ENCODE measurements at regions of chr16 and their contacts with region 1.

Region 1: GRCh38 chr16:4416200-4417032 is at the start of gene CORO7:
- DNase-seq: peak; percentile 98 to 100 (median 99)
- ATAC-seq: peak; percentile 78
- H3K4me3 ChIP-seq: peak within 1 kb of the TSS; percentile 51 to 60
- H3K4me3 Mint-ChIP-seq: peak within 1 kb of the TSS; percentile 97
- H3K27ac ChIP-seq: peak within 1 kb of the TSS; percentile 89 to 94
- H3K27ac Mint-ChIP-seq: peak within 1 kb of the TSS; percentile 99
- H3K4me1 ChIP-seq: peaks cover 44% of the 10 kb centered on the region
- H3K4me1 Mint-ChIP-seq: peaks cover 33% of the 10 kb centered on the region
- H3K27me3 ChIP-seq: no peaks in the 10 kb centered on the region
- H3K27me3 Mint-ChIP-seq: no peaks in the 10 kb centered on the region
- CTCF ChIP-seq: no peak
- total RNA-seq, gene CORO7: 950 to 991 TPM

Region 2: DNA sequence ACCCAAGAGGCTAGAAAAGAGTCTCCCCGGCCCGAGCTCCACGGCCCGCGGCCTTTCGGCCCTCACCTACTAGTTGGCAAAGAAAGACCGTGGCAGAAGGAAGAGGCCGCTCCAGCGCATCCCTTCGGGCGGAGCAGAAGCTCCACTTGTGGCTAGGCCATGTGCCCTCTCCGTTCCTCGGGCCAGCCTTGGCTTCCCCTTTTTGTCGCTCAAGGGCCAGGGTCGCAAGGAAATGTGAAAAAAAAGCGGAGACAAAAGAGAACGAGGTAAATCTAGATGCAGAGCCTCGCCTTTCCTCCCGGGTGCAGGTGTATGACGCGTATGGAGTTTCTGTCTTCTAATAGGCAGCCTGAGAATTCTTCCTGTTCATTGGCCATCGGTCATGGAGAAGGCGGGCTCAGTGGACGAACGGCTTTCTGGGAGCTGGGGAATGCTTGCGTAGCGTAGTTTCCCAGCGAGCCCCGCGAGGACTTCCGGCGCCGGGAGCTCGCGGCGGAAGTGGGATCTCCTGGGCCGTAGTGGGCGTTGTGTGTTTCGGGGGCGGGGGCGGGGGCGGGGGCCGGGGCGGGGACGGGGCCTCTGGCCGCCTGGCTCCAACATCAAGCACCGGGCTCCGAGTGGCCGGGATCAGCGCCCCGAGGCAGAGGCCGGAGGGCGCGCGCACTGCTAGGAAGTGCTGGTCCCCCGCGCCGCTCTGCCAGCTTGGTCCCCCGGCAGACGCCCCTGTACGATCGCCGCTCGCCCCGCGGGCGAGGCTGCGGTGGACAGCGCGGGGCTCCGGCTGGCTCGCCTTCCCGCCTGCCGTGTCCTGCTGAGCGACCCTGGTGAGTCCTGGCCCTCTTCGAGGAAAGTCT is 1281.6 kb before region 1 on chr16 and contains the start of gene ZNF213:
- CTCF ChIA-PET with region 1: no interaction called
- POLR2A ChIA-PET with region 1: no interaction called
- intact Hi-C with region 1: loop called in 1 of 2 experiments (anchors 10 kb)
- DNase-seq: peak; percentile 84 to 99 (median 92)
- ATAC-seq: peak; percentile 99
- H3K4me3 ChIP-seq: peak within 1 kb of the TSS; percentile 89 to 93
- H3K4me3 Mint-ChIP-seq: peak within 1 kb of the TSS; percentile 95
- H3K27ac ChIP-seq: peak within 1 kb of the TSS; percentile 94 to 95
- H3K27ac Mint-ChIP-seq: peak within 1 kb of the TSS; percentile 99
- H3K4me1 ChIP-seq: peaks cover 15% of the 10 kb centered on the region
- H3K4me1 Mint-ChIP-seq: peaks cover 29% of the 10 kb centered on the region
- H3K27me3 ChIP-seq: no peaks in the 10 kb centered on the region
- H3K27me3 Mint-ChIP-seq: no peaks in the 10 kb centered on the region
- CTCF ChIP-seq: peak; percentile 5
- total RNA-seq, gene ZNF213: 1.8 to 2.2 TPM

Region 3: DNA sequence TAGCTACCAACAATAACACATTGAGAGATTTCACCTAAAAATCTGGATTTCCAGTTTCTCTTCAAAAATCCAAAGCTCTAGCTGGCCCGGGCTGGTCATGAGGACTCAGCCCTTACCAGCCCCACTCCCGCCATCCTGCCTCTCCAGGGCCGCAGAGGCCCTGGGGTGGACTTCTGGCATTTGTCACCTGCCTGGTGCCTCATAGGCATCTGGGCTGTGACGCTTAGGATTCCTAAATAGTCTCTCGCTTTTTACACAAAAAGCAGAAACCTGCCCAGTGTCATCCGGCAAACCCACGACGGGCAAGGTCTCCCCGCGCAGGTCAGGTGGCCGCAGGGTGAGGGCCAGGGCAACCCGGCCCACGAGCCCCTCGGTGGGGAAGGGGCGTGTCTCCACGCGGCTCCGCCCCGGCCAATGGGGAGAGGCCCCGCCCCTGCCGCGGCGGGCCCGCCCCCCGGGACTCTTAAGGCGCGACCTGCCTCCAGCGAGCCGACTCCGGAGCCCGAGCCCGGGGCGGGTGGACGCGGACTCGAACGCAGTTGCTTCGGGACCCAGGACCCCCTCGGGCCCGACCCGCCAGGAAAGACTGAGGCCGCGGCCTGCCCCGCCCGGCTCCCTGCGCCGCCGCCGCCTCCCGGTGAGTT is 44.9 kb before region 1 on chr16 and contains the start of gene VASN:
- CTCF ChIA-PET with region 1: no interaction called
- POLR2A ChIA-PET with region 1: no interaction called
- intact Hi-C with region 1: loop called in 1 of 2 experiments (anchors 2 kb)
- DNase-seq: peak; percentile 53 to 84 (median 75)
- ATAC-seq: peak; percentile 74
- H3K4me3 ChIP-seq: peak within 1 kb of the TSS; percentile 28 to 54
- H3K4me3 Mint-ChIP-seq: peak within 1 kb of the TSS; percentile 84
- H3K27ac ChIP-seq: no peak within 1 kb of the TSS
- H3K27ac Mint-ChIP-seq: peak within 1 kb of the TSS; percentile 32
- H3K4me1 ChIP-seq: peaks cover 19% of the 10 kb centered on the region
- H3K4me1 Mint-ChIP-seq: peaks cover 19% of the 10 kb centered on the region
- H3K27me3 ChIP-seq: no peaks in the 10 kb centered on the region
- H3K27me3 Mint-ChIP-seq: no peaks in the 10 kb centered on the region
- CTCF ChIP-seq: no peak
- total RNA-seq, gene VASN: 0.57 to 0.83 TPM

Region 4: GRCh38 chr16:4402439-4403132 is 13.8 kb before region 1 on chr16:
- CTCF ChIA-PET with region 1: interaction called, 31 read pairs
- POLR2A ChIA-PET with region 1: interaction called, 11 read pairs
- intact Hi-C with region 1: no loop called
- DNase-seq: peak in 8 of 9 experiments; percentile 50 to 83 (median 68)
- ATAC-seq: peak; percentile 37
- H3K4me3 ChIP-seq: no peak overlapping the region
- H3K4me3 Mint-ChIP-seq: no peak overlapping the region
- H3K27ac ChIP-seq: no peak overlapping the region
- H3K27ac Mint-ChIP-seq: no peak overlapping the region
- H3K4me1 ChIP-seq: no peaks in the 10 kb centered on the region
- H3K4me1 Mint-ChIP-seq: peaks cover 19% of the 10 kb centered on the region
- H3K27me3 ChIP-seq: no peaks in the 10 kb centered on the region
- H3K27me3 Mint-ChIP-seq: no peaks in the 10 kb centered on the region
- CTCF ChIP-seq: peak; percentile 71

Measured in CD8-positive, alpha-beta T cell (primary cell).